Psoas muscle (tissue), 8 donors: ENCODE measurements at regions of chr9 and their contacts with region 1.

Region 1: DNA sequence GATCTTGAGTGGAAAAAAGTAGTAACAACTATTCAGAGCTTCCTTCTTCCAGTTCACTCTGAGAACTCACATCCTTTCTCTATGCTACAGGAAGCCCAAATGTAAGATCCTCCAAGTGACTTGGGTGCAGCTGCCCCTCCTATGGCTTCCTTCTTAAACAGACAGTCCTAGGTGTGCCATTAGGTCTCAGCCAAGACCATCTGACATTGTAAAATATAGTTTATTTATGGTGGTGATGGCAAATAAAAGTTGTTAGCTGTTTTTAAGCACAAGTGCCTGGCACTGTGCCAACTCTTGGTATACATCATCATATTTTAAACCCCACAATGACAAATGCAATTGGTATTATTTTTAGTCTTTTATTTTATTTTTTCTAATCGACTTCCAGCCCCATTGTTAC is 58.1 kb downstream of the TMEM252 start:
- DNase-seq: no peak
- ATAC-seq: no peak
- H3K4me3 ChIP-seq: no peak overlapping the region
- H3K27ac ChIP-seq: no peak overlapping the region
- H3K4me1 ChIP-seq: no peaks in the 10 kb centered on the region
- H3K27me3 ChIP-seq: no peaks in the 10 kb centered on the region
- CTCF ChIP-seq: no peak

Region 2: DNA sequence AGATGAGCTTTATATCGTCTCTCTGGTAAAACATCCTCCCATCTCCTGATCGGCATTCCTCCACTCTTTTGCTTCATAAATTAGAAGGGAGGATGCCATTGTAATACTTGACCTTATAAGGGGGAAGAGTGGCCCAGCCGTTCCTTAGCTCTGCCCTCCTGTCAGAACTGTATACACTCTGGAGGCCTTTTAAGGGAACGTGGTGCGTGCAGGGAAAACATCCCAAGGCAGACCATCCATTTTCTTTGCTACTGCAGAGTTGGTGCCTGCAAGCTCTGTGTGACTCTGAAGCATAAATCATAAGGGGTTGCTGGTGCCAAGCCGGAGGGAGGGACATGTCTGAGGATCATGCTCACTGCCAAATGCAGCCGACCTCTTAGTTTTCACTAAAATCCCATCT is 35.7 kb before region 1 on chr9:
- intact Hi-C with region 1: loop called in 1 of 2 experiments (anchors 5 kb)
- DNase-seq: peak in 1 of 2 donors; percentile 22
- ATAC-seq: no peak
- H3K4me3 ChIP-seq: no peak overlapping the region
- H3K27ac ChIP-seq: no peak overlapping the region
- H3K4me1 ChIP-seq: no peaks in the 10 kb centered on the region
- H3K27me3 ChIP-seq: no peaks in the 10 kb centered on the region
- CTCF ChIP-seq: no peak

Region 3: GRCh38 chr9:68631811-68632210 is 149.3 kb after region 1 on chr9:
- intact Hi-C with region 1: no loop called
- DNase-seq: no peak
- ATAC-seq: no peak
- H3K4me3 ChIP-seq: no peak overlapping the region
- H3K27ac ChIP-seq: no peak overlapping the region
- H3K4me1 ChIP-seq: no peaks in the 10 kb centered on the region
- H3K27me3 ChIP-seq: no peaks in the 10 kb centered on the region
- CTCF ChIP-seq: no peak